CD8-positive, alpha-beta T cell (primary cell): ENCODE measurements at regions of chr3 and their contacts with region 1.

Region 1: GRCh38 chr3:44477312-44478030 is at the start of gene ZNF445:
- DNase-seq: peak; percentile 46 to 89 (median 73)
- ATAC-seq: peak; percentile 87
- H3K4me3 ChIP-seq: peak within 1 kb of the TSS; percentile 48 to 62
- H3K4me3 Mint-ChIP-seq: peak within 1 kb of the TSS; percentile 95
- H3K27ac ChIP-seq: peak within 1 kb of the TSS; percentile 8 to 16
- H3K27ac Mint-ChIP-seq: peak within 1 kb of the TSS; percentile 87
- H3K4me1 ChIP-seq: peaks cover 16% of the 10 kb centered on the region
- H3K4me1 Mint-ChIP-seq: peaks cover 42% of the 10 kb centered on the region
- H3K27me3 ChIP-seq: no peaks in the 10 kb centered on the region
- H3K27me3 Mint-ChIP-seq: no peaks in the 10 kb centered on the region
- CTCF ChIP-seq: no peak
- total RNA-seq, gene ZNF445: 4.8 to 5.2 TPM

Region 2: DNA sequence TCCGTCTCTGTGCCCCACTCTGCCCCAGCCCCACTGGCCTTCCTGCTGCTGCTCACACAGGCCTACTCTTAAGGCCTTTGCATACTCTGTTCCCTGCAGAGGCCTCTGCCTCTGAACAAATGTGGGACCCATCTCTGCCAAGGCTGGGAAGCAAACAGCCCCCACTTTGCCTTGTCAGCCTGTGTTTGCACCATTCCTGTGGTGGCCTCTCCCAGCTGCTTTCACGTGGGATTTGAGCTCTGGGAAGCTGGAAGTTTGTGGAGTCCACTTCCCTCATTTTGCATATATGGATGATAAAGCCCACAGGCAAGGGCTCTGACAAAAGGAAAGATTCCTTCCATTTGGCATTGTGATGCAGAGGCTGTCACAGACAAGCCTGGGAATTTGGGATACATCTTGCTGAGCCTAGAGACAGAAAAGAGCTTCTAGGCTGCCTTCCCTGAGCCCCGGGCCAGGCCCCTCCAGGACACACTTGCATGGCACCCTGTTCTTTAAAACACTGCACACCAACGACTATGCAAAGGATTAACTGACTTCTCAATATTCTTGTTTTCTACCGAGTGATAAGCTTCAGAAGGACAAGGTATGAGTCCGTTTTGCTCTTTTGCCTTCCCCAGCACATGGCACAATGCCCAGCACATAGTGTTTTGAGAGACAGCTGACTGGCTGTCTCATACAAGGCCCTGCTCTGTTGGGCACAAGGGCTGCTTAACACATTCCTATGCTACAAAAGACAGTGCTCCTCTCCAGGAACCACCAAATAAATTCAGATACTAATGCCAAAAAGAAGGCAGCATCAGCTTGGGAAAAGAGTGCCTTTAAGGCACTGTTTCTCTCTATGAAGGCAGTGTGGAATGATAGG is 356.5 kb before region 1 on chr3:
- CTCF ChIA-PET with region 1: no interaction called
- POLR2A ChIA-PET with region 1: no interaction called
- intact Hi-C with region 1: no loop called
- DNase-seq: no peak
- ATAC-seq: no peak
- H3K4me3 ChIP-seq: no peak overlapping the region
- H3K4me3 Mint-ChIP-seq: no peak overlapping the region
- H3K27ac ChIP-seq: no peak overlapping the region
- H3K27ac Mint-ChIP-seq: no peak overlapping the region
- H3K4me1 ChIP-seq: no peaks in the 10 kb centered on the region
- H3K4me1 Mint-ChIP-seq: no peaks in the 10 kb centered on the region
- H3K27me3 ChIP-seq: no peaks in the 10 kb centered on the region
- H3K27me3 Mint-ChIP-seq: peaks cover 12% of the 10 kb centered on the region
- CTCF ChIP-seq: no peak

Region 3: GRCh38 chr3:44338010-44338827 is 139.3 kb before region 1 on chr3 and contains the start of gene TCAIM:
- CTCF ChIA-PET with region 1: no interaction called
- POLR2A ChIA-PET with region 1: interaction called, 3 read pairs
- intact Hi-C with region 1: loop called (anchors 1 kb)
- DNase-seq: peak; percentile 97 to 100 (median 99)
- ATAC-seq: peak; percentile 92
- H3K4me3 ChIP-seq: peak within 1 kb of the TSS; percentile 76 to 91
- H3K4me3 Mint-ChIP-seq: peak within 1 kb of the TSS; percentile 93
- H3K27ac ChIP-seq: peak within 1 kb of the TSS; percentile 88 to 93
- H3K27ac Mint-ChIP-seq: peak within 1 kb of the TSS; percentile 97
- H3K4me1 ChIP-seq: peaks cover 15% of the 10 kb centered on the region
- H3K4me1 Mint-ChIP-seq: peaks cover 32% of the 10 kb centered on the region
- H3K27me3 ChIP-seq: no peaks in the 10 kb centered on the region
- H3K27me3 Mint-ChIP-seq: peaks cover 6% of the 10 kb centered on the region
- CTCF ChIP-seq: no peak
- total RNA-seq, gene TCAIM: 3.1 to 3.7 TPM

Region 4: DNA sequence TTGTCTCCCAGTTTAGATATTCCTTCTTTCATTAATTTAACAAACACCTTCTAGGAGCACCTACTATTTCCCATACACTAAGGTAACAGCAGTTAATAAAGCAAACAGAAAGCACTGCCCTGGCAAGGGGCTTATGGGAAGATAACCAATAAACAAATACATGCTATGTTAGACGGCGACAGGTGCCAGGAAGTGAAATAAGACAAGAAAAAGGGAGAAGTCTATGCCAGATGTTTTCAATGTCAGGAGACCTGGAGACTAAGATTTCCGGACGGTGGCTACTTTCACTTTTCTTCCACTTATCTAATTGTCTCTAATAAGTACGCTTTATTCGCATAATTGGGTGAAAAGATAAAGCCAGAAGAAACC is 32.5 kb after region 1 on chr3:
- CTCF ChIA-PET with region 1: no interaction called
- POLR2A ChIA-PET with region 1: interaction called, 20 read pairs
- intact Hi-C with region 1: loop called (anchors 1 kb)
- DNase-seq: peak in 4 of 9 experiments; percentile 6 to 54 (median 21)
- ATAC-seq: peak; percentile 27
- H3K4me3 ChIP-seq: peak overlapping the region; percentile 78
- H3K4me3 Mint-ChIP-seq: peak overlapping the region; percentile 96
- H3K27ac ChIP-seq: peak overlapping the region; percentile 61 to 82
- H3K27ac Mint-ChIP-seq: peak overlapping the region; percentile 96
- H3K4me1 ChIP-seq: peaks cover 22% of the 10 kb centered on the region
- H3K4me1 Mint-ChIP-seq: peaks cover 49% of the 10 kb centered on the region
- H3K27me3 ChIP-seq: no peaks in the 10 kb centered on the region
- H3K27me3 Mint-ChIP-seq: no peaks in the 10 kb centered on the region
- CTCF ChIP-seq: no peak

Region 5: DNA sequence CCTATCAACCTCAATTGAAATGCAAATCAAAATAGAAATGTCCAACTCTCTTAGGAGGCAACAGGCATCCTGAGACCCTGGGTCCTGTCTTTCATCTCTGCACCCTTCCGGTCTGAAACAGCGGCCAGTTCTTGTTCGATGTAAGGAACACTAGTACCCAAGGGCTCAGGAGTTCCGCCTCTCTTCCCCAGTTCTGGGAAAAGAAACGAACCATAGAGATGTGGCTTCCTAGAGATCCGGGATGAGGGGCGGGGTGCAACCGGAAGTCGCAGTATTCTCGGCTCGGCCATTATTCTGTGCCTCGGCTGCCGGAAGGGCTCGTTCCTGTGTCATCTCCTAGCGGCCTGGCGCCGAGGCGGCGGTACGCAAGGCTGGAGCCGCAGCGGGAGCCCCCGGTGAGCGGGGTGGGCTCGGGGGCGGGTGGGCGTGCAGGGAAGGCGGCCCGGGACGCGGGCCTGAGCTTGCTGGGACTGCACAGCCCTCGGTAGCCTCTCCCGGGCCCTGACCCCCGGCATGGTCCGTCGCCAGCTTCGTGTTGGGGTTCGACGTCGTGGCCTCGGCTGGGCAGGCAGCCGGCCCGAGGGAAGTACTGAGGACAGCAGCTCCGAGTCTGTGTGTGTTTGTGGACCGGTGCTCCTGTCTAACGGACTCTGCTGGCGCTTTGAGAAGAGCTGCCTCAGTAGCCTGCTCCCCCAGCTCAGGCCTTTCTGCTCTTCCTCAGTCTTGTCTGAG is 147.4 kb after region 1 on chr3 and contains the start of gene ZNF197:
- CTCF ChIA-PET with region 1: no interaction called
- POLR2A ChIA-PET with region 1: no interaction called
- intact Hi-C with region 1: loop called in 1 of 2 experiments (anchors 2 kb)
- DNase-seq: peak in 8 of 9 experiments; percentile 42 to 76 (median 55)
- ATAC-seq: peak; percentile 76
- H3K4me3 ChIP-seq: peak within 1 kb of the TSS; percentile 66 to 70
- H3K4me3 Mint-ChIP-seq: peak within 1 kb of the TSS; percentile 88
- H3K27ac ChIP-seq: peak within 1 kb of the TSS; percentile 49 to 60
- H3K27ac Mint-ChIP-seq: peak within 1 kb of the TSS; percentile 80
- H3K4me1 ChIP-seq: peaks cover 13% of the 10 kb centered on the region
- H3K4me1 Mint-ChIP-seq: peaks cover 46% of the 10 kb centered on the region
- H3K27me3 ChIP-seq: no peaks in the 10 kb centered on the region
- H3K27me3 Mint-ChIP-seq: no peaks in the 10 kb centered on the region
- CTCF ChIP-seq: no peak
- total RNA-seq, gene ZNF197: 2.9 to 3.5 TPM